ENCODE measurements at regions of chr1 and their contacts with region 1.

Region 1: DNA sequence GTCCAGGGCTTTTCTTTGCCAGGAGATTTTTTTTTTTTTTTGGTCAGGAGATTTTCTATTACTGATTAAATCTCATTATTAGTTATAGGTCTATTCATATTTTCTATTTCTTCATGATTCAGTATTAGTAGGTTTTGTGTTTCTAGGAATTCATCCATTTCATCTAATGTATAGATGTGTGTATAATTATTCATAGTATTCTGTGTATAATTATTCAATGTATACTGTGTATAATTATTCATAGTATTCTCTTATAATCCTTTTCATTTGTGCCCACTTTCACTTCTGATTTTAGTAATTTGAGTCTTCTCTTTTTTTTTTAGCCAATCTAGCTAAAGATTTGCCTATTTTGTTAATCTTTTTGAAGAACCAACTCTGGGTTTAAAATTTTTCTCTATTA is 12.3 kb upstream of the PNRC2 start:
- DNase-seq: no peak
- ATAC-seq: no peak
- H3K4me3 Mint-ChIP-seq: no peak overlapping the region
- H3K27ac Mint-ChIP-seq: no peak overlapping the region
- H3K4me1 Mint-ChIP-seq: peaks cover 20% of the 10 kb centered on the region
- H3K27me3 Mint-ChIP-seq: no peaks in the 10 kb centered on the region
- CTCF ChIP-seq: no peak

Region 2: GRCh38 chr1:23790696-23791515 is 156.5 kb before region 1 on chr1 and contains the start of gene LYPLA2:
- CTCF ChIA-PET with region 1: no interaction called
- POLR2A ChIA-PET with region 1: no interaction called
- intact Hi-C with region 1: no loop called
- DNase-seq: peak; percentile 81
- ATAC-seq: peak; percentile 90
- H3K4me3 Mint-ChIP-seq: peak within 1 kb of the TSS; percentile 99
- H3K27ac Mint-ChIP-seq: peak within 1 kb of the TSS; percentile 95
- H3K4me1 Mint-ChIP-seq: peaks cover 26% of the 10 kb centered on the region
- H3K27me3 Mint-ChIP-seq: no peaks in the 10 kb centered on the region
- CTCF ChIP-seq: no peak
- total RNA-seq, gene LYPLA2: 75.8 and 81.6 TPM in 2 replicates

Region 3: GRCh38 chr1:23930861-23931490 is 16.4 kb before region 1 on chr1:
- CTCF ChIA-PET with region 1: interaction called, 3 read pairs
- POLR2A ChIA-PET with region 1: interaction called, 10 read pairs
- intact Hi-C with region 1: no loop called
- DNase-seq: no peak
- ATAC-seq: peak; percentile 86
- H3K4me3 Mint-ChIP-seq: peak overlapping the region; percentile 76
- H3K27ac Mint-ChIP-seq: peak overlapping the region; percentile 91
- H3K4me1 Mint-ChIP-seq: peaks cover 43% of the 10 kb centered on the region
- H3K27me3 Mint-ChIP-seq: no peaks in the 10 kb centered on the region
- CTCF ChIP-seq: no peak

Region 4: GRCh38 chr1:24043345-24044032 is 96.1 kb after region 1 on chr1:
- CTCF ChIA-PET with region 1: no interaction called
- POLR2A ChIA-PET with region 1: no interaction called
- intact Hi-C with region 1: no loop called
- DNase-seq: no peak
- ATAC-seq: no peak
- H3K4me3 Mint-ChIP-seq: no peak overlapping the region
- H3K27ac Mint-ChIP-seq: no peak overlapping the region
- H3K4me1 Mint-ChIP-seq: no peaks in the 10 kb centered on the region
- H3K27me3 Mint-ChIP-seq: peaks cover 3% of the 10 kb centered on the region
- CTCF ChIP-seq: no peak